ENCODE measurements at regions of chr17 and their contacts with region 1.

Region 1: GRCh38 chr17:35312790-35313711 is 60.4 kb downstream of the SLFN11 start:
- DNase-seq: peak; percentile 25 to 60 (median 40)
- H3K4me3 ChIP-seq: no peak overlapping the region
- H3K27ac ChIP-seq: no peak overlapping the region
- H3K4me1 ChIP-seq: peaks cover 6% of the 10 kb centered on the region
- H3K27me3 ChIP-seq: no peaks in the 10 kb centered on the region
- CTCF ChIP-seq: peak; percentile 66 to 76 (median 72)
- EP300 ChIP-seq: no peak
- POLR2A ChIP-seq: no peak

Region 2: DNA sequence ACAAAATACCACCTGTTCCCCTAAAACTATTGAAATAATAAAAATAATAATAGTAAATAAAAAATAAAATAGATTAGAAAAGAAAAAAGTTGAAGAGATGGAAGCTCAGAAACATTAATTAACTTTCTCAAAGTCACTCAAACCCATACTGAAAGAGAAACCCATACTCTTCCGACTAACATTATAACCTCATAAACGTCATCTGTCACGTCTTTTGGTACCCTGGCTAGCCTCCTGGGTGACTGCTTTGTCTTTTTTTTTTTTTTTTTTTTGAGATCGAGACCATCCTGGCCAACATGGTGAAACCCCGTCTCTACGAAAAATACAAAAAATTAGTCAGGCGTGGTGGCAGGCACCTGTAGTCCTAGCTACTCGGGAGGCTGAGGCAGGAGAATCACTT is 216.8 kb after region 1 on chr17:
- intact Hi-C with region 1: loop called in 2 of 4 experiments (anchors 5 to 10 kb)
- DNase-seq: no peak
- H3K4me3 ChIP-seq: no peak overlapping the region
- H3K27ac ChIP-seq: no peak overlapping the region
- H3K4me1 ChIP-seq: no peaks in the 10 kb centered on the region
- H3K27me3 ChIP-seq: no peaks in the 10 kb centered on the region
- CTCF ChIP-seq: no peak
- EP300 ChIP-seq: no peak
- POLR2A ChIP-seq: no peak

Region 3: GRCh38 chr17:35540589-35541404 is 227.7 kb after region 1 on chr17:
- intact Hi-C with region 1: loop called in 3 of 4 experiments (anchors 2 to 10 kb)
- DNase-seq: peak in 1 of 5 donors; percentile 25
- H3K4me3 ChIP-seq: peak overlapping the region; percentile 22
- H3K27ac ChIP-seq: no peak overlapping the region
- H3K4me1 ChIP-seq: peaks cover 2% of the 10 kb centered on the region
- H3K27me3 ChIP-seq: no peaks in the 10 kb centered on the region
- CTCF ChIP-seq: no peak
- EP300 ChIP-seq: no peak
- POLR2A ChIP-seq: no peak